ENCODE measurements at regions of chr16 and their contacts with region 1.

Region 1: GRCh38 chr16:82031116-82032084 is 3.7 kb upstream of the HSD17B2 start:
- DNase-seq: peak; percentile 72
- ATAC-seq: peak; percentile 82
- H3K4me3 ChIP-seq: no peak overlapping the region
- H3K27ac ChIP-seq: peak overlapping the region; percentile 66
- H3K4me1 ChIP-seq: peaks cover 8% of the 10 kb centered on the region
- H3K27me3 ChIP-seq: peaks cover 5% of the 10 kb centered on the region; the same call in 1 of the 2 replicates
- CTCF ChIP-seq: peak; percentile 62
- POLR2A ChIP-seq: no peak
- RAD21 ChIP-seq: peak; percentile 68

Region 2: GRCh38 chr16:81891736-81892357 is 139.6 kb before region 1 on chr16:
- CTCF ChIA-PET with region 1: no interaction called
- POLR2A ChIA-PET with region 1: no interaction called
- dilution Hi-C with region 1: no loop called
- in situ Hi-C with region 1: no loop called
- intact Hi-C with region 1: loop called (anchors 2 kb)
- DNase-seq: no peak
- ATAC-seq: no peak
- H3K4me3 ChIP-seq: no peak overlapping the region
- H3K27ac ChIP-seq: no peak overlapping the region
- H3K4me1 ChIP-seq: no peaks in the 10 kb centered on the region; the same call in 1 of the 2 replicates
- H3K27me3 ChIP-seq: peaks cover 12% of the 10 kb centered on the region
- CTCF ChIP-seq: no peak
- POLR2A ChIP-seq: no peak
- RAD21 ChIP-seq: no peak

Region 3: DNA sequence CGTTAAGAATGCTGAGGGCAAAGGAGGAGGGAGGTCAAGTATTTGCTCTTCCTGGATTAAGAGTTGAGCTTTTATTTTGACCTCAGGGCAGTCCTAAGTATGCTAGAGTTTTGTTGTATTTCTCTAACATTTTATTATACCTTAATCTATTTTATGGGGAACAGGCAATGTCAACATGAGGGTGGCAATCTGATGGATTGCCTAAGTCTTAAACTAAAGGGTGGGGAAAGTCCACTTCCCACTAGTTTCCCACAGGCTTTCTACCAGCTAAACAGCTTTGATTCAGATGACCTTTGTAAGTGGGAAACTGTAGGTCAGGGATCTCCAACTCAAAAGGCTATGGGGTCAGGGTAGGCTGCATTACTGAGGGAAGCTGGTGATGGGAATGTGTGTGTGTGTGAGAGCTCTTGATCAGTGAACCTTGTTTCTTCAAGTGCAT is 28.6 kb after region 1 on chr16:
- CTCF ChIA-PET with region 1: no interaction called
- POLR2A ChIA-PET with region 1: no interaction called
- dilution Hi-C with region 1: no loop called
- in situ Hi-C with region 1: no loop called
- intact Hi-C with region 1: no loop called
- DNase-seq: no peak
- ATAC-seq: no peak
- H3K4me3 ChIP-seq: no peak overlapping the region
- H3K27ac ChIP-seq: peak overlapping the region; percentile 8; the same call in 1 of the 2 replicates
- H3K4me1 ChIP-seq: peaks cover 7% of the 10 kb centered on the region
- H3K27me3 ChIP-seq: no peaks in the 10 kb centered on the region
- CTCF ChIP-seq: no peak
- POLR2A ChIP-seq: no peak
- RAD21 ChIP-seq: no peak

Region 4: GRCh38 chr16:82169861-82170845 is 138.8 kb after region 1 on chr16 and contains the start of gene MPHOSPH6:
- CTCF ChIA-PET with region 1: no interaction called
- POLR2A ChIA-PET with region 1: no interaction called
- dilution Hi-C with region 1: no loop called
- in situ Hi-C with region 1: no loop called
- intact Hi-C with region 1: loop called (anchors 1 kb)
- DNase-seq: peak; percentile 86
- ATAC-seq: peak; percentile 99
- H3K4me3 ChIP-seq: peak within 1 kb of the TSS; percentile 85
- H3K27ac ChIP-seq: peak within 1 kb of the TSS; percentile 88
- H3K4me1 ChIP-seq: peaks cover 2% of the 10 kb centered on the region; the same call in 1 of the 2 replicates
- H3K27me3 ChIP-seq: peaks cover 10% of the 10 kb centered on the region
- CTCF ChIP-seq: no peak; the same call in 1 of the 2 replicates
- POLR2A ChIP-seq: peak; percentile 70; the same call in 1 of the 2 replicates
- RAD21 ChIP-seq: no peak
- total RNA-seq, gene MPHOSPH6: 5.4 and 28.1 TPM in 2 replicates

Region 5: DNA sequence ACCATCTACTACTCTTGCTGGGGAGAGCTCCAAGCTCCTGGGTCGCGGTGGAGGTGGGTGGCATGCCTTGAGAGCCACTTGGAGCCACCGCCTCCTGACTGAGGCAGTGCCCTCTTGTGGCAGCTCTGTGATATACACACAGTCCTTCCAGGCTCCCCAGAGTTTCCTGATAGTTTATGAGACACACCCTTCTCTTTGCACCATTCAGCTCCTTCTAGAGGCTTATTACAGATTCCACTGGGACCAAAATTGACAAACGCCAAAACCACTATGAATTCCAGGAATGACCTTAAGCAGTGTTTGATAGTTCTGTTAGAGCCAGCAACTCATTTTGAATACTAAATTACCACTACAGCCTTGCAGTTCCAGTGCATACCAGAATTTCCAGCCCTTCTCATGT is 425.3 kb after region 1 on chr16:
- CTCF ChIA-PET with region 1: no interaction called
- POLR2A ChIA-PET with region 1: no interaction called
- dilution Hi-C with region 1: no loop called
- in situ Hi-C with region 1: no loop called
- intact Hi-C with region 1: loop called (anchors 1 kb)
- DNase-seq: peak; percentile 36
- ATAC-seq: peak; percentile 93
- H3K4me3 ChIP-seq: no peak overlapping the region
- H3K27ac ChIP-seq: no peak overlapping the region
- H3K4me1 ChIP-seq: no peaks in the 10 kb centered on the region
- H3K27me3 ChIP-seq: peaks cover 1% of the 10 kb centered on the region
- CTCF ChIP-seq: peak; percentile 61
- POLR2A ChIP-seq: no peak
- RAD21 ChIP-seq: peak; percentile 40; the same call in 1 of the 2 replicates

Measured in IMR-90 (cell line).